Dendritic cell treated with granulocyte-macrophage colony-stimulating factor and Interleukin-4, amounts not matched to agents 40 ng/mL and 50 ng/mL, for 4 days (primary cell): ENCODE measurements at regions of chrX and their contacts with region 1.

Region 1: DNA sequence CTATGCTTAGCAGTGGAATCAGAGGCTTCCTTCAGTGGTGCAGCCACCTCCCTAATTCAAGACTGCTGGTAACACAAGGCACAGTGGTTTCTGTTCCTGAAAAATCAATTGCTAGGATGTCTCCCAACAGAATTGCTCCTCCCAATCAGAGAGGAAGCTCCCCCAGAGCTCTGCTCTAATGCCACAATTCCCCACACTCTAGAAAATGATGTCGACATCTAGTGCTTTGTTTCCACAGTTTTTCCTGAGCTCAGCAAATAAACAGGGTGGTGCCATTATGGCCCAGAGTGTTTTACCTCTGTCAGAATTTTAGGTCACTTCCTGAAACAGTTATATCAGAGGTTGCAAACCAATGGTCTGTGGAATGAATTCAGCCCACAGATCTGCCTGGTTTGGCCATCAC is 24.7 kb downstream of the TAB3 start:
- H3K4me3 Mint-ChIP-seq: no peak overlapping the region
- H3K27ac Mint-ChIP-seq: peak overlapping the region; percentile 88
- H3K4me1 Mint-ChIP-seq: peaks cover 5% of the 10 kb centered on the region
- H3K27me3 Mint-ChIP-seq: no peaks in the 10 kb centered on the region

Region 2: DNA sequence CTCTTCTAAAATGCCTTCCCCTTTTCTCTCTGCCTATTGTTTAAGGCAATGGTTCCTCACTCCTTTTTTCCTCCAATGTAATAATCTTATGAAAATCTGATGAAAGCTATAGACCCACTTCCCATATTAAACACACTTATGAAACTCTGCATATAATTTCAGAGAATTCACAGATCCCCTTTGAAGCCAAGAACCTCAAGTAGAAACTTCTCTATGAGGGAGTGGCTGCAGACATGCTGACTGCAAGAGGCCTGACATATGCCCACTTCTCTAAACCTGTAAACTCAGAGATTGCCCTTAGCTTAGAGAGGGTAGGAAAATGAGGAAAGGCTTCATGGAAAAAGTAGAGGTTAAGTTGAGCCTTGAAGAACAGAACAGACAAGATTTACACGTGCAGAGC is 12.9 kb before region 1 on chrX:
- intact Hi-C with region 1: loop called (anchors 1 kb)
- H3K4me3 Mint-ChIP-seq: no peak overlapping the region
- H3K27ac Mint-ChIP-seq: peak overlapping the region; percentile 90
- H3K4me1 Mint-ChIP-seq: peaks cover 18% of the 10 kb centered on the region
- H3K27me3 Mint-ChIP-seq: no peaks in the 10 kb centered on the region

Region 3: DNA sequence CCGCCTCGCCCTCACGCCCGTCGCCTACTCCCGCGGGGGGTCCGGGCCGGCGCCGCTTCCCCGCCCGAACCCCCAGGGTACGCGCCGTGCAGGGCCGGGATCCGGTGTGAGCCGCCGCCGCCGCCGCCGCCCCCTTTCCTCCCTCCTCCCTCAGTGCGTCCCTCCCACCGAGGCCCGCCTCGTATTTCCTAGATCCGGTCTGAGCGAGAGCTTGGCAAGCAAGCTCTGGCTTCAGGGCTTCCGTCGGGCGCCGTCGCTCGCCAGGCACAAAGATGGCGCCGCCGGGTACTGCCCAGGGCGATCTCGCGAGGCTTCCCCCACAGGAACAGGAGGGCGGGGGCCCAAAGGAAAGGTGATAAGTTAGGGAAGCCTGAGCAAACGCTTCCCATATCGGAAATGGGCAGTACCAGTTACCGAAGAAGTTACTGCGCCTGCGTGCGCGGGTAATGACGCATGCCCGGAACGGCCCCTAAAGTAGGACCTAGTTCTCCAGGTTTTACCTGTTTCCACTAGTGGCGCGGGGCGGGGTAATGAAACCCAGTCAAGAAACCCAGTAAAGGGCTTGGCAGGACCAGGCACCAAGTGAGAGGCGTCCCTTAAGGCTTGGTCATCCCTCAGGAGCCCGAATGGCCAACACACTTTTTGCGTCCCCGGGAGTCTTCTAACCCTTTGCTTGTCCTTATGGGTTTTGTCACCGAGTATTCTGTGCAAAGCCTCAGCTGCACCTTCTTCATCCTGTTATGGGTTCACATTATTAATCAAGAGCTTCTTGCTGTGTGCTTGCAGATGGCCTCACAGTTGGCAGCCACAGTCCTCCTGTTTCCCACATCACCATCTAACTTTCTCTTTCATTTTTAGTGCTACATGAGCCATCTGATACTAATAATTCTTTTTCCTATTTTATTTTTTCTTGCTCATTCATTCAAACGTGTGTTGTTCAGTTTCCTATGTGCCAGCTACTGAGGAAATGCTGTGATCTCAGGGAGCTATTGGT is 25.1 kb after region 1 on chrX and contains the start of gene TAB3:
- intact Hi-C with region 1: loop called (anchors 1 kb)
- H3K4me3 Mint-ChIP-seq: peak within 1 kb of the TSS; percentile 82
- H3K27ac Mint-ChIP-seq: peak within 1 kb of the TSS; percentile 90
- H3K4me1 Mint-ChIP-seq: peaks cover 10% of the 10 kb centered on the region
- H3K27me3 Mint-ChIP-seq: no peaks in the 10 kb centered on the region

Region 4: GRCh38 chrX:30910124-30910860 is 45.9 kb after region 1 on chrX:
- intact Hi-C with region 1: no loop called
- H3K4me3 Mint-ChIP-seq: peak overlapping the region; percentile 34
- H3K27ac Mint-ChIP-seq: peak overlapping the region; percentile 82
- H3K4me1 Mint-ChIP-seq: peaks cover 12% of the 10 kb centered on the region
- H3K27me3 Mint-ChIP-seq: no peaks in the 10 kb centered on the region